ENCODE measurements at regions of chr2 and their contacts with region 1.

Region 1: DNA sequence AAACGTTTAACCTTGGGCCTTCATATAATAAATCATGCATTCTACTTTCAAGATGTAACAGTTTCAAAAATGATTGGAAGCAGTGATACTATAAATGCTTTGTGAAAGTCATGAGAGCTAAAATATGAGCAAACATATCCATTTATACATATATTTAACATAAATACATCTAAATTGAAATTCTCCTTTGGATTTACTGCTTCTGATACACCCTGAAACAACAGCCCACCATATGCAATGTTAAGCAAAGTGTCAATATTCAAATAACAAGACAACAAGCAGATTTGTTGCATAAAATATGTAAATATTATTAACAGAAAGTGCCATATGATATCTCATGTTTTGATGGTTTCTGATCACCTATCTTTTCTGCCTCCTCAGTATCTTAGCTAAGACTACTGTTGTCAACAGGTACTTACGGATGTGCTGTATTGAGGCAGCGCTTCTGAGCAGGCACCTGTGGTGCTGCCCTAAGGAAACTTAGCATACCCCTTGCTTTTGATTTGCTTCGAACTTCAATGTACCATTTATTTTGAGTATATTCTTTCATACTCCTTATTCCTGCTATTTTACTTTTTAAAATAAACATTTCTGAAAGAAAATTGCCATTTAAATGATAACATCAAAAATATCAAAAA is 6.1 kb downstream of the FIGN start:
- DNase-seq: no peak

Region 2: GRCh38 chr2:163397451-163397850 is 332.3 kb before region 1 on chr2:
- intact Hi-C with region 1: no loop called
- DNase-seq: no peak

Region 3: DNA sequence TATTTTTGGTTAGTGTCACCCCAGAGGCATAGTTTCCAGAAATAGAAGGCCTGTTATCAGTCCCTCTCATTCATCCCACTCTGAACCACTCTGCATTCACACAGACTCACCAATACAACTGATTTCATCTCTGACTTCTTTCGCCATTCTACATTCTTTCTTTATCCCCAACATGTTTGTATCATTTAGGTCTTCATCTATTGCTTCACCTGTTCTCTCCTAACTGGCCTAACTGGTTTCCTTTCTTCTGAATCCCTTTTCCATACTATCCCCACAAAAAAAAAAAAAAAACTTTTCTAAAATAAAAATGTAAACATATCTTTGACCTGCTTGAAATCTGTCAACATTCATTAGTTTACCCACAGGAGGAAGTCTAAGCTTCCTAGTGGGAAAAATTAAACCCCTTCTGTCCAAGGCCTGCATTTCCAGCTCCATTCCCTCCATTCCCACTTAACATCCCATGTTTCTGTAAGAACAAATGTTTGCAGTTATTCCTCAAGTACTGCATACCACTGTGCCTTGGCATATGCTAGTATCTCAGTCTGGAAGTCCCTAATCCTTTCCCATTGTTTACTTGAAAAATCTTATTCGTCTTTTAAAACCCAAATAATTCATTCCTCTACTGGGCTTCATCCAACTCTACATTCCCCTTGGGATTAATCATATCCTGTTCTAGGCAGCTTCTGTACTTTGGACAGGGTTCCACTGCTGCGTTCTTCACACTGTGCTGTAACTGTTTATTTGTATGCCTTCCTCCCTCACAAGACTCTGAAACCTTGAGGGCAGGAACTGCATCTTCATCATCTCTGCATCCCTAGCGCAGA is 62.5 kb before region 1 on chr2:
- intact Hi-C with region 1: loop called in 1 of 2 experiments (anchors 10 kb)
- DNase-seq: no peak

Region 4: GRCh38 chr2:163698857-163699256 is 30.9 kb before region 1 on chr2:
- intact Hi-C with region 1: loop called in 1 of 2 experiments (anchors 1 kb)
- DNase-seq: no peak